ENCODE measurements at regions of chrX and their contacts with region 1.

Region 1: GRCh38 chrX:129678614-129679195 is 23.9 kb upstream of the APLN start:
- DNase-seq: no peak
- H3K4me3 ChIP-seq: peak overlapping the region; percentile 25
- H3K4me3 Mint-ChIP-seq: no peak overlapping the region
- H3K27ac Mint-ChIP-seq: no peak overlapping the region
- H3K4me1 ChIP-seq: no peaks in the 10 kb centered on the region
- H3K4me1 Mint-ChIP-seq: peaks cover 9% of the 10 kb centered on the region
- H3K27me3 ChIP-seq: no peaks in the 10 kb centered on the region
- H3K27me3 Mint-ChIP-seq: no peaks in the 10 kb centered on the region
- CTCF ChIP-seq: no peak

Region 2: GRCh38 chrX:129427267-129427666 is 251.4 kb before region 1 on chrX:
- CTCF ChIA-PET with region 1: no interaction called
- POLR2A ChIA-PET with region 1: no interaction called
- intact Hi-C with region 1: no loop called
- DNase-seq: no peak
- H3K4me3 ChIP-seq: no peak overlapping the region
- H3K4me3 Mint-ChIP-seq: no peak overlapping the region
- H3K27ac Mint-ChIP-seq: no peak overlapping the region
- H3K4me1 ChIP-seq: no peaks in the 10 kb centered on the region
- H3K4me1 Mint-ChIP-seq: no peaks in the 10 kb centered on the region
- H3K27me3 ChIP-seq: no peaks in the 10 kb centered on the region
- H3K27me3 Mint-ChIP-seq: no peaks in the 10 kb centered on the region
- CTCF ChIP-seq: no peak

Region 3: DNA sequence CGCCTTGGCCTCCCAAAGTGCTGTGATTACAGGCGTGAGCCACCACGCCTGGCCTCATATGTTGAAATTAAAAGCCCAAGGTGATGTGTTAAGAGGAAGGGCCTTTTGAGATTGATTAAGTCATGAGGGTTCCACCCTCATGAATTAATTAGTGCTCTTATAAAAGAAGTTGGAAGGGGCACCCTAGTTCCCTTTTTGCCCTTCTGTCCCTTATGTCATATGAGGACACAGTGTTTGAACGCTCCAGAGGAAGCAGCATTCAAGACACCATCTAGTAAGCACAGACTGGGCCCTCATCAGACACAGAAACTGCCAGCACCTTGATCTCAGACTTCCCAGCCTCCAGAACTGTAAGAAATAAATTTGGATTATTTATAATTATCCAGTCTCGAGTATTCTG is 18.8 kb before region 1 on chrX:
- CTCF ChIA-PET with region 1: interaction called, 3 read pairs
- POLR2A ChIA-PET with region 1: no interaction called
- intact Hi-C with region 1: loop called (anchors 2 kb)
- DNase-seq: no peak
- H3K4me3 ChIP-seq: no peak overlapping the region
- H3K4me3 Mint-ChIP-seq: no peak overlapping the region
- H3K27ac Mint-ChIP-seq: no peak overlapping the region
- H3K4me1 ChIP-seq: no peaks in the 10 kb centered on the region; the same call in 1 of the 2 replicates
- H3K4me1 Mint-ChIP-seq: no peaks in the 10 kb centered on the region
- H3K27me3 ChIP-seq: no peaks in the 10 kb centered on the region
- H3K27me3 Mint-ChIP-seq: no peaks in the 10 kb centered on the region
- CTCF ChIP-seq: no peak